Heart right ventricle (tissue), 16 donors: ENCODE measurements at regions of chr13 and their contacts with region 1.

Region 1: GRCh38 chr13:112606109-112607001 is 18.4 kb upstream of the TUBGCP3 start:
- DNase-seq: peak; percentile 93 to 96
- ATAC-seq: peak; percentile 100
- H3K4me3 ChIP-seq: peak overlapping the region in 9 of 10 donors; percentile 24 to 61 (median 53)
- H3K27ac ChIP-seq: peak overlapping the region in 9 of 10 donors; percentile 26 to 73 (median 60)
- H3K4me1 ChIP-seq: peaks cover 0 to 11% (median 5%) of the 10 kb centered on the region in 9 donors
- H3K27me3 ChIP-seq: no peaks in the 10 kb centered on the region
- CTCF ChIP-seq: peak; percentile 92 to 99 (median 95)

Region 2: DNA sequence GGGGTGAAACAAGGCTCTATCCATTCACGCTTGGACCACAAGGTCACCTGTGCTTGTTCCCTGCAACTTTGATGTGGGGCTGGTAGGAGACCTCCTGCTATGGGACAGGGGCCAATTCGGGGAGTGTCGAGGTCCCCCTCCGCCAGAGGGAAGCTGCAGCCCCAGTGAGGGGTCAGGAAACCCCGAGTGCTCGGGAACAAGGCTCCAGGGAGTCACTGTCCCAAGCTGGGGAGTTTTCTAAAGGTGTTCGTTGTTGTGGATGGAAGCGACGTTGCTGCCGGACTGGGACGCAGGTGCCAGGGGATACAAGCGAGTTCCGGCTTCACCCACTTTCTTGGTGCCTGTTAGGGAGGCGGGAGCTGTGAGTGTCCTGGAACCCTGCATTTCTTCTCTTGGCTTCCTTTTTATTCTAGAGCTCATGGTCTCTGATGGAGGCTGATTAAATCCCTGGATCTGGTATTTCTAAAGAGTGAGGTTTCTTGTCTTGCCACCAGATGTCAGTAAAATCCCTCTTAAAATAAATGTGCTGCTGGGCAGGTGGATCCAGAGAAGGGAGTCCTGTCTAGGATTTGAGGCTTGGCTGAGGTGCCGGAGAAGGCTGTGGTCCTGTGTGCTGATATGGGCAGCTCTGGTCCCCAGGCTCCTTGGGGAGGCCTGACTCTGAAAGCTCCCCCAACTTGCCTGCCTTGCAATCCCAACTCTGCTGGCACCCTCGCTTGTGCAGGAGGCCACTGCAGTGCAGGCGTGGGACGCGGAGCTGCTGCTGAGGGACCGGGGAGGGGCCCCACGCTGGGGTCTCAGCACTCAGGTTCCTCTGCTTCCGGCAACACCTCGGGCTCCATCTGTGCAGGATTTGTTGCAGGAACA is 1132.0 kb before region 1 on chr13:
- intact Hi-C with region 1: loop called in 6 of 10 experiments (anchors 5 kb)
- DNase-seq: no peak
- ATAC-seq: peak in 5 of 8 donors; percentile 19 to 72 (median 43)
- H3K4me3 ChIP-seq: no peak overlapping the region
- H3K27ac ChIP-seq: no peak overlapping the region
- H3K4me1 ChIP-seq: no peaks in the 10 kb centered on the region
- H3K27me3 ChIP-seq: peaks cover 0 to 29% (median 3%) of the 10 kb centered on the region in 7 donors
- CTCF ChIP-seq: peak; percentile 16 to 69 (median 58)

Region 3: DNA sequence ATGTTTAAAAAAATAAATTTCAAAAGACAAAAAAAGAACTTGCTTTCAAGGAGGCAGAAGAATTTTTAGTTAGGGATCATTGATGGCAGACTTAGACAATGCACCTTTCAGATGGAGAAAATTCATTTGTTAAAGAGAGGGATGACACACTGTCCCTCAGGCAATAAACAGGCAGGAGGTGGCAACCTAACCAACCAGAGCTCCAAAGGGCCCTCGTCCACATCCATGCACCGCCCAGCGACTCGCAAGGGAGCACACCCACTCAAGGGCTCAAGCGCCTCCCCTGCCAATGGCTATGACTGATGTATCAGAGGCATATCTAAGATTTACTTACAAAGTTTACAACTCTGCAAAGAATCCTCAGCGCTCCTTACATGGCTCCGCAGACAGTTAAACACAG is 100.3 kb before region 1 on chr13:
- intact Hi-C with region 1: loop called in 1 of 10 experiments (anchors 10 kb)
- DNase-seq: no peak
- ATAC-seq: no peak
- H3K4me3 ChIP-seq: no peak overlapping the region
- H3K27ac ChIP-seq: no peak overlapping the region
- H3K4me1 ChIP-seq: no peaks in the 10 kb centered on the region
- H3K27me3 ChIP-seq: no peaks in the 10 kb centered on the region
- CTCF ChIP-seq: no peak

Region 4: GRCh38 chr13:112532837-112533745 is 73.3 kb before region 1 on chr13:
- intact Hi-C with region 1: loop called in 2 of 10 experiments (anchors 10 kb)
- DNase-seq: no peak
- ATAC-seq: no peak
- H3K4me3 ChIP-seq: no peak overlapping the region
- H3K27ac ChIP-seq: no peak overlapping the region
- H3K4me1 ChIP-seq: peaks cover 0 to 9% (median 3%) of the 10 kb centered on the region in 9 donors
- H3K27me3 ChIP-seq: no peaks in the 10 kb centered on the region
- CTCF ChIP-seq: no peak